ENCODE measurements at regions of chr19 and their contacts with region 1.

Region 1: DNA sequence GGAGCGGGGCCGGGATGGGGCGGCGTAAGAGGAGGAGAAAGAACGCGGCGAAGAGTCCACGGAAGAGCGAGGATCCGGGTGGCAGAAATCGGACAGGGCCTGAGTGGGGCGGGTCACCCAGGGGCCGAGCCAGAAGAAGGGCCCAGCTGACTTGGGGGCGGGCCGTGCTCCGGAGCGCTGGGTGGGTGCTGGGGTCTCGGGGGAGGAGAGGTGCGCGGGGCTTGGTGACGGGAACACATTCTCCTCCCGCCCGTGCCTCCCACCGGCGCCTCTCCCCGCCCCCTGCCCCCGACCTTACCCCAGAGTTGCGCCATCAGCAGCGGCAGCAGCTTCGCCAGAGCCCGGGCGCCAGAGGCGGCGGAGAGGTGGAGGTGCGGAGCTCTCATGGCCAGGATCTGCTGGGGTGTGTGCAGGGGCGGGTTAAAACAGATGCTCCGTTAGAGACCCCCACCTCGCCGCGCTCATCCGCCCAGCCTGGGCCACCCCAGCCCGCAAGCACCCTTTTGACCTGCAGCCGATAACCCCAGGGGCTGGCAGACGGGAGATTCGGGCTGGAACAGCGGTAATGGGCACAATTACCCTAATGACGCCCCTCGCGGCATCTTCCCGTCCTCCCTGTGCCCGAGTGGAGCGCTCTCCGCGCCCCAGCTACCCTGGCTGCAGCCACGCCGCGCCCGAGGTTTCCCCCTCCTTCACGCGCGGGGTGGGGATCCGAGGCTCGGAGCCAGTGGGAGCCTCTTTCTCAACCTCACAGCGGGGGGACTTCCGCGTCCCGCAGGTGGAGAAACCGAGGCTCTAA is 565 bp downstream of the KLK10 start:
- DNase-seq: peak; percentile 43 to 54
- H3K4me3 ChIP-seq: peak overlapping the region; percentile 29 to 54 (median 40)
- H3K27ac ChIP-seq: peak overlapping the region in 2 of 5 donors; percentile 12 to 46
- H3K4me1 ChIP-seq: peaks cover 27 to 48% (median 45%) of the 10 kb centered on the region in 4 donors
- H3K27me3 ChIP-seq: peaks cover 8 to 82% (median 43%) of the 10 kb centered on the region in 3 donors
- CTCF ChIP-seq: no peak
- EP300 ChIP-seq: no peak
- POLR2A ChIP-seq: no peak

Region 2: GRCh38 chr19:51094696-51095279 is 75.8 kb after region 1 on chr19:
- intact Hi-C with region 1: loop called (anchors 2 kb)
- DNase-seq: peak; percentile 45 to 61
- H3K4me3 ChIP-seq: no peak overlapping the region
- H3K27ac ChIP-seq: no peak overlapping the region
- H3K4me1 ChIP-seq: peaks cover 0 to 29% (median 19%) of the 10 kb centered on the region in 4 donors
- H3K27me3 ChIP-seq: no peaks in the 10 kb centered on the region
- CTCF ChIP-seq: peak in 5 of 7 experiments; percentile 51 to 81 (median 73)
- EP300 ChIP-seq: no peak
- POLR2A ChIP-seq: no peak

Region 3: DNA sequence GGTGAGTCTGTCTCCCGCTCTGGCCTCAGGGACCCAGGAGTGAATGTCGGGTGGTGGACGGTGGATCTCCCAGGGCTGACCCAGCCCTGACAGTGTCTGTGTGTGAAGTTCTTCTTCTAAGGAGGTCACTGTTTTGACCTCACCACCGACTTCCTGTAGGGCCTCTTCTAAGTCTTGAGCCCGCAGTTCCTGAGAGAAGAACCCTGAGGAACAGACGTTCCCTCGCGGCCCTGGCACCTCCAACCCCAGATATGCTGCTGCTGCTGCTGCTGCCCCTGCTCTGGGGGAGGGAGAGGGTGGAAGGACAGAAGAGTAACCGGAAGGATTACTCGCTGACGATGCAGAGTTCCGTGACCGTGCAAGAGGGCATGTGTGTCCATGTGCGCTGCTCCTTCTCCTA is 123.2 kb after region 1 on chr19 and contains the start of gene SIGLEC7:
- intact Hi-C with region 1: no loop called
- DNase-seq: no peak
- H3K4me3 ChIP-seq: no peak within 1 kb of the TSS
- H3K27ac ChIP-seq: peak within 1 kb of the TSS in 2 of 5 donors; percentile 43 to 59
- H3K4me1 ChIP-seq: peaks cover 0 to 12% (median 0%) of the 10 kb centered on the region in 4 donors
- H3K27me3 ChIP-seq: peaks cover 0 to 48% (median 21%) of the 10 kb centered on the region in 3 donors
- CTCF ChIP-seq: no peak
- EP300 ChIP-seq: no peak
- POLR2A ChIP-seq: no peak
- total RNA-seq, gene SIGLEC7: 0.18 to 1.3 TPM in 2 of 5 donors, not detected in the others

Measured in stomach (tissue), 19 donors.